Right ventricle myocardium superior (tissue), 1 donor: ENCODE measurements at regions of chr10 and their contacts with region 1.

Region 1: DNA sequence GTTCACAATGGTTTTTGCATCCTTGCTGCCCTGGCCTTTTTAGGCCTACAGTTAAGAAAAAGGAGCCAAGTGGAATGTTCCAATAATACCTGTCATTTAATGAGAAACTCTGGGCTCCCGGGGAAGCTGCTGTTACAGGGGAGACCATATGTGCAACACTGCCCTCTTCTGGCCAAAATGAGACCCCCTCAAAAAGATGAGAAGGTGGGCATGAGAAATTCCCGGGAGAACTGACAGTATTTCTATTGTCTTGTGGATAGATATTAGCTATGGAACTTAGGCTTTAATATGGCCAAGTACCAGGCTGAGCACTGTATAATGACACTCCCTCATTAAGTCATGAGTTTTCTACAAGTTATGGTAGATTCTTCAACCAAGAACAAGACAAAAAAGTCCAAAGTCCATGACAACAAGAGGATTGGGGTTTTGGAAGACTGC is 99.4 kb downstream of the CCDC3 start:
- DNase-seq: no peak
- ATAC-seq: no peak

Region 2: GRCh38 chr10:12782537-12782936 is 119.6 kb before region 1 on chr10:
- intact Hi-C with region 1: loop called (anchors 10 kb)
- DNase-seq: no peak
- ATAC-seq: no peak

Region 3: DNA sequence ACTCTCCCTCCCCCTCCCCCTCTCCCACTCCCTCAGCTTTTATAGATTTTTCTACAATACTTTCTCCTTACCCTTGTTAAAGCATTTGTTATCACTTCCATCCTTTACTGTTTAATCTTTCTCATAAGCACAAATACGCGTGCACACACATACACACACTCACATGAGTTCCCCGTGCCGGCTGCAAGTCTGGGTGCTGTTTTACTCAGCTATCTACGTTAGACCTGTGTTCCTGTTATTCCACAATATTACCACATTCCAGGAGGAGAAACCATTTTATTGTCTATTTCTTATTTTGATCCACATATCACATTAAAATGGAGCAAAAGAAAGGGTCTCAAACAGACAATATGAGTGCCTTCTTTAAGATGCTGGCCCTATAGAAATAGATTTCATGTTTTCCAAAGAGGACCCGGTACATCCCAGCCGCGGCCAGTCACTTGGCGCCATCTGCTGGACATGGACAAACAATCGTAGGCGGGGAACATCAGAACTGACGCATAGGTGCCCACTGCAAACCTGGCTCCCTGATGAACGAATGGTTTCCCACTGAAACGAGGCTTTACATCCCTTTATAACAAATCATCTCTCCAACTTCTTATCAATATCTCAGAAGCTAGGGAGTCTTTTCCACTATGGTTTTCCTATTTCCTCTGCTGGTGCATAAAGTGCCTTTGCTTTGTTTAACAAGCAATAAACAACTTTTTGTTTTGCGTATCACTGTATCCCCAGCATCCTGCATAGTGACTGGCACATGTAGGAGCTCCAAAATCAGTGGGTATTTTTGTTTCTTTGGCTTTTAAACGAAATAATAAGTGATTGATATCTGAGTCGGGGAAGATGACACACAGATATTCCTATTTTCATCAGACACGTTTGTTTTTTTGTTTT is 172.7 kb after region 1 on chr10:
- intact Hi-C with region 1: loop called (anchors 10 kb)
- DNase-seq: peak; percentile 65
- ATAC-seq: peak; percentile 83